ENCODE measurements at regions of chr6 and their contacts with region 1.

Region 1: DNA sequence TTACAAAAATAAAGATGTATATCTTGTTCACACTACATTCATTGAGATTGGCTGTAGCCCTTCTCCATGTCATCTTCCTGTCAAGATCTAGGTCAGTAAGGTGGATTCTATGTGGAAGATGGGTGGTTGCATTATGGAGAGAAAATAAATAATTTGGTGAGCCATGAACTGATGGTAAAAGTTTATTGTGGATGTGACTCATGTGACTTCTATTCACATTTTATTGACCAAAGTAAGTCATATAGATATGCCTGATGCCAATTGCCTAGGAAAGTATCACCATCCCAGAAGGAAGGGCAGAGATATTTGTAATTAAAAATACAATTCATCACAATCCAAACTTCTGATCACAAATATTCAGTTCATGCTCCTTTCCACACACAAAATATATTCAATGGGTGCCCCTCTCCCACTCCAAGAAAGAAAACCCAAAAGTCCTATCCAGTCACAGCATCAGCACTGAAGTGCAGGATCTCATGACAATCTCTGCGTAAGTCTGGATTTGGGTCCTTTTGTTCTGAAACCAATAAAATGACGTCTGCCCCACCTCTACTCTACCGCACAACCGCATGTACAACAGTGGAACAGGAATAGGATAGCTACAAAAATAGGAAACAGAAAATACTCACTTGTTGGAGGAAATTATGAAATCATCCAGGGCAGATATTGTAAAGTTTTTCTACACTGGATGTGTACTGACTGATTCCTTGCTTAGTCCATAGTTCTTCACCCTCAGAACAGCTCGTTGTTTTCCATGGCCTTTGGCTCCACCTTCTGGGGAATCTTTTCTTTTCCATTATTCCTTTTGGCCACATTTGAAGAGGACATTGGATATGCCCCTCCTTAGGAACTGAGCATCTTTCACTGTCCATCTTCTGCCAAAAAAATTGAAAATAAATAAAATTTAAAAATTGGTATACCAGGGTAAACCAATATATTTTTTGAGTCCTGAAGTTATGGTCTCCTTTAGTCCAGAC is 16.1 kb upstream of the SLC17A3 start:
- DNase-seq: peak in 1 of 5 donors; percentile 11
- ATAC-seq: peak in 3 of 4 donors; percentile 52 to 67 (median 63)
- H3K4me3 ChIP-seq: no peak overlapping the region
- H3K27ac ChIP-seq: no peak overlapping the region
- H3K4me1 ChIP-seq: no peaks in the 10 kb centered on the region
- H3K27me3 ChIP-seq: no peaks in the 10 kb centered on the region
- CTCF ChIP-seq: peak in 11 of 12 donors; percentile 10 to 62 (median 44)
- POLR2A ChIP-seq: no peak

Region 2: GRCh38 chr6:25717866-25718740 is 172.1 kb before region 1 on chr6:
- intact Hi-C with region 1: loop called in 1 of 10 experiments (anchors 10 kb)
- DNase-seq: no peak
- ATAC-seq: no peak
- H3K4me3 ChIP-seq: no peak overlapping the region
- H3K27ac ChIP-seq: no peak overlapping the region
- H3K4me1 ChIP-seq: peaks cover 0 to 6% (median 0%) of the 10 kb centered on the region in 12 donors
- H3K27me3 ChIP-seq: peaks cover 0 to 12% (median 0%) of the 10 kb centered on the region in 9 donors
- CTCF ChIP-seq: peak; percentile 21 to 70 (median 54)
- POLR2A ChIP-seq: no peak

Region 3: GRCh38 chr6:25793970-25794369 is 96.2 kb before region 1 on chr6:
- intact Hi-C with region 1: loop called in 2 of 10 experiments (anchors 5 to 10 kb)
- DNase-seq: no peak
- ATAC-seq: no peak
- H3K4me3 ChIP-seq: no peak overlapping the region
- H3K27ac ChIP-seq: no peak overlapping the region
- H3K4me1 ChIP-seq: no peaks in the 10 kb centered on the region
- H3K27me3 ChIP-seq: peaks cover 0 to 11% (median 0%) of the 10 kb centered on the region in 9 donors
- CTCF ChIP-seq: no peak
- POLR2A ChIP-seq: no peak

Region 4: DNA sequence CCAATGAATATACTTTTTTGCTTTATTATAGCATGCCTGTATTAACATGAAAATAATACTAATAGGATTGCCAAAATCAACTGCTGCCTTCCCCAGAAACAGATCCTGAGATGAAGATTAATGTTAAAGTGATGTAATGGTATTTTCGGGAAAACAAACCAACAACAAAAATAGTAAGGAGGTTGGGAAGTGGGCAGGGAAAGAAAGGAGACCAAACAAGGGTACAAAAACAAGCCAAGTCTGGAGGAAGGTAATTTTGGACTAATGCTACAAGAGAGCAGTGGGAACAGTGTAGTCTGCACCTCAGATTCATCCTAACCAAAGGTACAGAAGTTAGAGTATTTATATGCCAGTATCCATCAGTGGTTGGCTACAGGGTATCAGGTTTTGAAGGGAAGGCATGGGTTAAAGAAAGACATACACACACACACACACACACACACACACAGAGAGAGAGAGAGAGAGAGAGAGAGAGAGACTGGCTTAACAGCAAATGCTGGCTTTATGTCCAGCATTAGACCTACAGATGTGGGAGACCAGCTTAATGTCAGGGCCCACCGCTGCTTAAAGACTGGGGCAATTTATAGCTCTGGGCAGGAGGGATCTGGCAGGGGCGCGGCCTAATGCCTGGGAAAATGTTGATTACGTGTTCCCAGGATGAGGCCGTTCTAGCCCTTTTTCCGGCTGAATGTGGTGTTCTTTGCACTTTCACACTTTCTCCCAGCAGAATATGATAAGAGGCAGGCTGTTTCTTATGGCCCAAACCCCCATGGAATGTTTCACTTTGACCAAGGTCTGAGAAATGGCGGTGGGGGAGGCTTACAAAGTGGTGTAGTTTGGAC is 54.5 kb before region 1 on chr6:
- intact Hi-C with region 1: no loop called
- DNase-seq: peak in 1 of 5 donors; percentile 7
- ATAC-seq: peak in 3 of 4 donors; percentile 15 to 68 (median 56)
- H3K4me3 ChIP-seq: no peak overlapping the region
- H3K27ac ChIP-seq: peak overlapping the region in 3 of 12 donors; percentile 1 to 34 (median 30)
- H3K4me1 ChIP-seq: peaks cover 0 to 6% (median 0%) of the 10 kb centered on the region in 12 donors
- H3K27me3 ChIP-seq: no peaks in the 10 kb centered on the region
- CTCF ChIP-seq: no peak
- POLR2A ChIP-seq: no peak

Measured in heart left ventricle (tissue), 16 donors.